ENCODE measurements at regions of chr11 and their contacts with region 1.

Region 1: DNA sequence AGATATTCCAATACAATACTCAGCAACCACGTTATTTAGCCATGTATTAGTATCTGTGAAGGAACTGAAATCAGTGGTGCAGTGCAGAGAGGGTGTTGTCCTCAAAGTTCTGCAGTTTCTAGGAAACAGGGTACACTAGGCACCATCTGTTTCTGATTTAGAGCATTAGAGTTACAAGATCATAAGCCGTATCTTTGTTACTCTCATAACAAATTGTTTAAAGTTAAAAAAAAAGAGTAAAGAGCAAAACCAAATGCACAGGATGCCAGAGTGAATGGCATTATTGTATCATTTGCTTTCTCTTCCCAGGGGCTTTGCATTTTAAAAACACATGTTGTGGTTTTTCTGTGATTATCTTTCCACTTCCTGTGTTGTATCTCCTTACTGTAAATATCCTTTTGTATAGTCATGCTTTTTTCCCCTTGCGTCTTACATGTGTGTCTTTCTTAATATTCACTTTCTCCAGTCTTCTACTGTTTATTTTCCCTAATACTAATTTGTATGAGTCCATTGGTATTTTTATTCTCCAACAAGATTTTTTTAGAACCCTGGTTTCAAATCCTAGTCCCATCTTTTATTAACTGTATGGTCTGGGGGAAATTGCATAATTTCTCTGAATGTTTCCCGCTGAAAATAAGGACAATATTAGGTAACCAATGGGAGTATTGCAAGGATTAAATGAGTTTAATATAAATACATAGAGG is 15.2 kb upstream of the NUP160 start:
- DNase-seq: peak in 7 of 9 donors; percentile 34 to 84 (median 69)
- ATAC-seq: peak; percentile 76
- H3K4me3 ChIP-seq: no peak overlapping the region
- H3K4me3 Mint-ChIP-seq: peak overlapping the region; percentile 19 to 63 (median 54)
- H3K27ac ChIP-seq: peak overlapping the region; percentile 40
- H3K27ac Mint-ChIP-seq: peak overlapping the region; percentile 47 to 93 (median 70)
- H3K4me1 ChIP-seq: peaks cover 16 to 33% of the 10 kb centered on the region in 2 donors
- H3K4me1 Mint-ChIP-seq: peaks cover 13 to 49% (median 44%) of the 10 kb centered on the region in 7 donors
- H3K27me3 ChIP-seq: no peaks in the 10 kb centered on the region
- H3K27me3 Mint-ChIP-seq: no peaks in the 10 kb centered on the region

Region 2: GRCh38 chr11:47611348-47611794 is 252.0 kb before region 1 on chr11:
- CTCF ChIA-PET with region 1: no interaction called
- POLR2A ChIA-PET with region 1: no interaction called
- intact Hi-C with region 1: no loop called
- DNase-seq: no peak
- ATAC-seq: peak; percentile 56
- H3K4me3 ChIP-seq: no peak overlapping the region
- H3K4me3 Mint-ChIP-seq: no peak overlapping the region
- H3K27ac ChIP-seq: no peak overlapping the region
- H3K27ac Mint-ChIP-seq: peak overlapping the region in 4 of 9 donors; percentile 17 to 53 (median 42)
- H3K4me1 ChIP-seq: no peaks in the 10 kb centered on the region
- H3K4me1 Mint-ChIP-seq: peaks cover 0 to 8% (median 0%) of the 10 kb centered on the region in 7 donors
- H3K27me3 ChIP-seq: no peaks in the 10 kb centered on the region
- H3K27me3 Mint-ChIP-seq: no peaks in the 10 kb centered on the region

Region 3: GRCh38 chr11:47837292-47837691 is 26.0 kb before region 1 on chr11:
- CTCF ChIA-PET with region 1: no interaction called
- POLR2A ChIA-PET with region 1: no interaction called
- intact Hi-C with region 1: no loop called
- DNase-seq: no peak
- ATAC-seq: no peak
- H3K4me3 ChIP-seq: no peak overlapping the region
- H3K4me3 Mint-ChIP-seq: no peak overlapping the region
- H3K27ac ChIP-seq: no peak overlapping the region
- H3K27ac Mint-ChIP-seq: no peak overlapping the region
- H3K4me1 ChIP-seq: no peaks in the 10 kb centered on the region
- H3K4me1 Mint-ChIP-seq: peaks cover 0 to 25% (median 18%) of the 10 kb centered on the region in 7 donors
- H3K27me3 ChIP-seq: no peaks in the 10 kb centered on the region
- H3K27me3 Mint-ChIP-seq: no peaks in the 10 kb centered on the region

Region 4: DNA sequence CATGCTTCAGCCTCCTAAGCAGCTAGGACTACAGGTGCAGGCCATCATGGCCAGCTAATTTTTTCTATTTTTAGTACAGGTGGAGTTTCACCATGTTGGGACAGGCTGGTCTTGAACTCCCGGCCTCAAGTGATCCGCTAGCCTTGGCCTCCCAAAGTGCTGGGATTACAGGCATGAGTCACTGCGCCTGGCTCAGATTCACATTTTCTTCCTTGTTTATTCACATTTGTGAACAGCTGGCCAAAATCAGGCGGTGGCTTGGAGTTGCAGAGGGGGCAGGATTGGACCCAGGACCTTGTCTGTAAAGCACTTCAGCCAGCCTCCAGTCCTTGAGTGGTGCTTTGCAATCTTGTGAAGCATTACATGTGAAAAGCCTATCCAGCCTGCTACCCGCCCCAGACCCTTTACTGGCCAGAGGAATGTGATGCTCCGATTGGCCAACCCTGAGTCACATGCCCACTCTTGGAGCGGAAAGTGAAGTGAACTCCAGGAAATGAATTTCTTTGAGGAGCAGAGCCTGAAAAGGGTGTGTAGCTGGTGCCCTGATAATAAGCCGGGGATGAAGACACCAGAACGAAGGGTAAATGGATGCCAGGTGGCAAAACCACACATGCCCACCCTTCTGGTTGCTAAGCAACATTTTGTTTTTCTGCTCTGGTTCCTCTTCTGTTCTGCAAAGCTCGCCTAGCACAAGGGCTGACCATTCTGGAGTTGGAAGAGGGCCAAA is 54.5 kb after region 1 on chr11:
- CTCF ChIA-PET with region 1: no interaction called
- POLR2A ChIA-PET with region 1: interaction called, 3 read pairs
- intact Hi-C with region 1: loop called (anchors 1 to 5 kb)
- DNase-seq: no peak
- ATAC-seq: peak; percentile 71
- H3K4me3 ChIP-seq: no peak overlapping the region
- H3K4me3 Mint-ChIP-seq: peak overlapping the region in 1 of 10 donors; percentile 24
- H3K27ac ChIP-seq: no peak overlapping the region
- H3K27ac Mint-ChIP-seq: peak overlapping the region; percentile 4 to 86 (median 60)
- H3K4me1 ChIP-seq: peaks cover 39 to 42% of the 10 kb centered on the region in 2 donors
- H3K4me1 Mint-ChIP-seq: peaks cover 27 to 77% (median 65%) of the 10 kb centered on the region in 7 donors
- H3K27me3 ChIP-seq: no peaks in the 10 kb centered on the region
- H3K27me3 Mint-ChIP-seq: no peaks in the 10 kb centered on the region

Region 5: DNA sequence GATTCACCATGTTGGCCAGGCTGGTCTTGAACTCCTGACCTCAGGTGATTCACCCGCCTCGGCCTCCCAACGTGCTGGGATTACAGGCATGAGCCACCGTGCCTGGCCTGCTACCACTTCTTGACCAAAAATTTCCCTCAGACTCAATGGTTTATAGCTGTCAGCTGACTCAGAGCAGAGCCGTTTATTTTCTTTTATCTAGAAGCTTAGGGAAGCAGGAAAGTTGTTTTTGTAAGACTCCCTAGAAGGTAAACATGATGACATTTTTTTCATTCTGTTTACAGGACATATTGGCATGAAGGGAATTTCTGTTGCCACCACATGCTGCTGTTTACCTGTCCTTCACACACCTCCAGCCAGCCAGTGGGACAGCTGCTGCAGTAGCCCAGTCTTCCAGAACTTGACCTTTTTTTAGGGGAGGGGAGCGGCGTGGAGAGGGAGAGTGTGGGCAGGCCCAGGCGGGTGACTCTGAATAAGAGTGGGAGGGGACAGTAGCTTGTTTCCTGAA is 60.9 kb after region 1 on chr11:
- CTCF ChIA-PET with region 1: no interaction called
- POLR2A ChIA-PET with region 1: no interaction called
- intact Hi-C with region 1: loop called (anchors 1 to 5 kb)
- DNase-seq: no peak
- ATAC-seq: no peak
- H3K4me3 ChIP-seq: no peak overlapping the region
- H3K4me3 Mint-ChIP-seq: peak overlapping the region in 1 of 10 donors; percentile 5
- H3K27ac ChIP-seq: no peak overlapping the region
- H3K27ac Mint-ChIP-seq: peak overlapping the region in 2 of 9 donors; percentile 50 to 74
- H3K4me1 ChIP-seq: peaks cover 23 to 27% of the 10 kb centered on the region in 2 donors
- H3K4me1 Mint-ChIP-seq: peaks cover 28 to 50% (median 42%) of the 10 kb centered on the region in 7 donors
- H3K27me3 ChIP-seq: no peaks in the 10 kb centered on the region
- H3K27me3 Mint-ChIP-seq: peaks cover 0 to 2% (median 0%) of the 10 kb centered on the region in 5 donors

Region 6: DNA sequence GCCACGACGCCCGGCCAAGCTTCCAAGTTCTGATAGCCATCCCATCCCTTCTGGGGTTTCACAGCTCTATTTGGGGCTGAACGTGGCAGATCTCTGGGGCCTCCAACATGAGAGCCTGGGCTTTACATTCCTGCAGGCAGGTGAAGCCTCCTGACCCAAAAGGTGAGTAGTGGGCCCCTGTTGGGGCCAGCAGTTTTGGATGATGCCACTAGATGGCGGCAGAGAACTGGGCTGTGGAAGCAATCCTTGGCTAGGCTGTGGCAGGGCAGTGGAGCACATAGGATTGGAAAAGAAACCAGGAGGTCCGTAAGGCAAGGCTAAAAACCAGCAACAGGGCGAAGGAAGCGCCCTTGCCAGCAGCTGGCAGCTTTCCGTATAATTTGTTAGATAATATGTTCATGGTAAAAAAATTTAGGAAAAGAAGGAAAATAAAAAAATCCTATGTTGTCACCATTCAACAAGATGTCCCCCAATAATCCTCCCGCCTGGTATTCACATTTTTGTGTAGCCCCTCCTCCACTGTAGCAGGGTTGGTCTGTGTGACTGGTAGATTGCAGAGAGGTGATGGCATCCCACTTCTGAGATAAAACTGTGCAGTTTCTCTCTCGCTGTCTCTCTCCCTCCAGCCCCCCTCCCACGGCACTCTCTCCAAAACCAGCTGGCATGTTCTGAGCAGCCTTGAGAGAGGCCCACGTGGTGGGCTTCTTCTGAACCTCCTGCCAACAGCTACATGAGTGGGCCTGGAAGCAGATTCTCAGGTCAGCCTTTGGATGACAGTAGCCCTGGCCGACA is 309.7 kb after region 1 on chr11:
- CTCF ChIA-PET with region 1: no interaction called
- POLR2A ChIA-PET with region 1: no interaction called
- intact Hi-C with region 1: no loop called
- DNase-seq: peak; percentile 27 to 68 (median 49)
- ATAC-seq: peak; percentile 80
- H3K4me3 ChIP-seq: no peak overlapping the region
- H3K4me3 Mint-ChIP-seq: peak overlapping the region in 1 of 10 donors; percentile 35
- H3K27ac ChIP-seq: no peak overlapping the region
- H3K27ac Mint-ChIP-seq: peak overlapping the region in 4 of 9 donors; percentile 26 to 63 (median 46)
- H3K4me1 ChIP-seq: peaks cover 0 to 4% of the 10 kb centered on the region in 2 donors
- H3K4me1 Mint-ChIP-seq: peaks cover 23 to 43% (median 35%) of the 10 kb centered on the region in 7 donors
- H3K27me3 ChIP-seq: no peaks in the 10 kb centered on the region
- H3K27me3 Mint-ChIP-seq: no peaks in the 10 kb centered on the region